IMR-90 (cell line): ENCODE measurements at regions of chr17 and their contacts with region 1.

Region 1: DNA sequence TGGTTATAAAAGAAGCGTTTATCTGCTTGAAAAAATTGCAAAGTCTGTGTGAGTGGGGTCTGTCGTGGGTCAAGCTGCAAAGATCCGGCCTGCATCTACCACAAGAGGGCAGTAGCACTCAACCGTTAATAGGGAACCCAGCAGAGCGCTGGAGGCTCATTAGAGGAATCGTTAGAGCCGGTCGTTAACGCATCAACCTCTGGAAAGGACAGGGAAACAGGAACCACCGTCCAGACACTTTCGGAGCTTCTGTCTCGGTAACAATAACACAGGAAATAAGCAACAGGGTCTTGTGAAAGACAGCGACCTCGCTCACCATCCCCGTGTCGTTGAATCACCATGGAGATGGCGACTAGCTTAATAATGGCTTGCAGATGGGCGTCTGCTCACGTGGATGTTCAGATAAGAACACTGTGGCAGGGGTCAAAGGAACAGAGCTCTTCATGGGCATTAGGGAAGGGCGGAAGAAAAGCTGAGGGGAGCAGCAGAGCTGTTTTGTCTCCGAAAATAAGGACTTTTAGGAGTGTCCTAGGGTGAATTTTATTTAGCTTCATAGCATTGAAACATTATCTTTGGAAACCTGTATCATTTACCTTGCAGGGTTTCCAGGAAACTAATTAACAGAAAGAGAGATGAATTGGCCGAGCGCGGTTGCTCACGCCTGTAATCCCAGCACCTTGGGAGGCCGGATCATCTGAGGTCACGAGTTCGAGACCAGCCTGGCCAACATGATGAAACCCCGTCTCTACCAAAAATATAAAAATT is 11.9 kb upstream of the NSRP1 start:
- DNase-seq: peak; percentile 75
- ATAC-seq: peak; percentile 99
- H3K4me3 ChIP-seq: peak overlapping the region; percentile 50
- H3K27ac ChIP-seq: no peak overlapping the region
- H3K4me1 ChIP-seq: no peaks in the 10 kb centered on the region
- H3K27me3 ChIP-seq: peaks cover 14% of the 10 kb centered on the region
- CTCF ChIP-seq: peak; percentile 87
- POLR2A ChIP-seq: no peak
- RAD21 ChIP-seq: peak; percentile 77

Region 2: DNA sequence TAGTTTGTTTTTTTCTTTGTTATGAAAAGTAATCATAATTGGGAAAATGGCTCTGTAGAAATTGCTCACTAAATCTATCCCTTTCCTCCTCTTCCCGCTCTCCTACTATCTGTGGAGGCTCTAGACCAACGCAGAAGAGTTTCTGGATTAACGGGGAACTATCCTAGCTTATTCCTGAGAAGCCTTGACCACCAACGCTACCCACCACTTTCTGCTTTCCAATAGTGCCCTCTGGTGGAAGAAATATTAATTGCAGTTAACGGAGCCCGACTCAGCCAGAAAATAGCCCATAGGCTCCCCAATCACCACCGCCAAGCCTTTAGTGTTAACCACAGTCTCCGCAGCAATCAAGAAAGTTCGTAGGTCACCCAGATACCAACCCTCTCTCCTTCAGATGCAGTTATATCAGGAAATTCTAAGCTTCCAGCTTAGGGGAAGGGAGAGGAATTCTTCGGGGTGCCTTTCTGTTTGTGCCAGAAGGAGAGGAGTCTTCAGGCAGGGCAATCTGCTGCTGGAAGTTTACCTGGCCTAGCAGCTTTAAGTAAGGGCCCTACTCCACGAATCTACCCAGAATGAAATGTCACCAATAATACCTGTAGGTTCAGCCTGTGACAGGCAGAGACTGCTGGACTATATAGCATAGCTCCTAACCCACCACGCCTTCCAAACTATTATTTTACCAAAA is 11.2 kb before region 1 on chr17:
- CTCF ChIA-PET with region 1: interaction called, 27 read pairs
- POLR2A ChIA-PET with region 1: no interaction called
- dilution Hi-C with region 1: no loop called
- in situ Hi-C with region 1: no loop called
- intact Hi-C with region 1: no loop called
- DNase-seq: peak; percentile 58
- ATAC-seq: peak; percentile 76
- H3K4me3 ChIP-seq: no peak overlapping the region
- H3K27ac ChIP-seq: no peak overlapping the region
- H3K4me1 ChIP-seq: peaks cover 2% of the 10 kb centered on the region
- H3K27me3 ChIP-seq: no peaks in the 10 kb centered on the region
- CTCF ChIP-seq: peak; percentile 89
- POLR2A ChIP-seq: no peak
- RAD21 ChIP-seq: peak; percentile 94

Region 3: DNA sequence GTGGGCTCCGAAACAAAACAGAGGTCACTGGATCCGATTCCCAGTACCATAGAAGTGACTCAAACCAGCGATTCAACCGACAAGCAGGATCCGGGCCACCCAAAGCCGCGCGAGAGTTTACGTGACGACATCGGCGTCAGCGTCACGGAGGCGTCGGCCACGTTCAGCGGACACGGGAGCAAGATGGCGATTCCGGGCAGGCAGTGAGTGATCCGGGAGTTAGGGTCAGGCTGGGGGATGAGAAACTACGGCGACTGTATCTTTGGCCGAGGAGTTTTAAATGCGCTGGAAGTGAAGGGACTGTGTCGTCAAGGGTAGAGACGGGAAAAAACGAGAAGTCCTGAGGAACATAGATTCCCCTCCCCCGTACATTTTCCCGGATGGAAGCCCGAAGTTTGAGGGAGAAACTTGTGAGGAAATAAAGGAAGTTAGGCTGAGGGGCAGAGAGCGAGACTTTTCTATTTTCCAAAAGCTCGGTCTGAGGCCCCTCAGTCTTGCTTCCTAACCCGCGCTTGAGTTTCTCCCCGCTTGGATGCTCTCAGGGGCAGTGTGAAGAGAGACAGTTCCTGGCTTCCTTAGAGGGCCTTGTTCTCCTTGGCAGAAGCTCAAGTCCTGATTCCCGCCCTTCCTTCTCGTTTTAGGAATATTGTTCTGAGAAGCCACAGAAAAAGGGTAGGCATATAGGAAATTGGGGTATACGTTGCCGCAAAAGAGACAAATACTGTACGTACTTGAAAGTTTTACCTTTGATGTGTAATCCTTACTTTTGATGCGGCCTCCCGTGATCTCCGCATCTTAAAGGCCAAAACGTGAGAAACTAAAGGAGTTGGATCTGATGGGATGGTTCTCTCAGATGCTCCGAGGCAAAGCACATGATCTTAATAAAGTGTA is 12.1 kb after region 1 on chr17 and contains the start of gene NSRP1:
- CTCF ChIA-PET with region 1: interaction called, 21 read pairs
- POLR2A ChIA-PET with region 1: no interaction called
- dilution Hi-C with region 1: no loop called
- in situ Hi-C with region 1: no loop called
- intact Hi-C with region 1: no loop called
- DNase-seq: peak; percentile 96
- ATAC-seq: peak; percentile 97
- H3K4me3 ChIP-seq: peak within 1 kb of the TSS; percentile 84
- H3K27ac ChIP-seq: peak within 1 kb of the TSS; percentile 97
- H3K4me1 ChIP-seq: no peaks in the 10 kb centered on the region
- H3K27me3 ChIP-seq: no peaks in the 10 kb centered on the region
- CTCF ChIP-seq: no peak
- POLR2A ChIP-seq: peak; percentile 98
- RAD21 ChIP-seq: no peak
- total RNA-seq, gene NSRP1: 3.4 and 5.8 TPM in 2 replicates